Tibial artery (tissue), 4 donors: ENCODE measurements at regions of chr17 and their contacts with region 1.

Region 1: DNA sequence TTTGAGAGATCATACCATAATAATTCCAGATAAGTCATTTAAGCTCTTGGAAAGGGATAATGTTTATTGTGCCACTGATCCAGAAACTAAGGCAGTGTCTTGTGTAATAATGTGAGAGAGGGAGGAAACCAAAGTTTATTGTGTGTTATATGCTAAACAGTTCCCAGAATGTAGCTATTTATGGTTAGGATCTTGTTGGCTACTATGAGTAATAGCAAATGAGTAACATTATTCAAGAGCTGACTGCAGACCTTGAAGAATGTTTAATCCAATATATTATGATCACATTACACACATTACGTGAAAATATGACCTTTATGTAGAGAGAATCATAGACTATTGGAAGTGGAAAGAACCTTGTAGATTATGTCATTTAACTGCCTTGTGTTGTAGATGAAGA is 139.5 kb downstream of the BCAS3 start:
- DNase-seq: no peak
- H3K4me3 ChIP-seq: no peak overlapping the region
- H3K27ac ChIP-seq: no peak overlapping the region
- H3K4me1 ChIP-seq: no peaks in the 10 kb centered on the region
- H3K27me3 ChIP-seq: no peaks in the 10 kb centered on the region
- CTCF ChIP-seq: no peak

Region 2: DNA sequence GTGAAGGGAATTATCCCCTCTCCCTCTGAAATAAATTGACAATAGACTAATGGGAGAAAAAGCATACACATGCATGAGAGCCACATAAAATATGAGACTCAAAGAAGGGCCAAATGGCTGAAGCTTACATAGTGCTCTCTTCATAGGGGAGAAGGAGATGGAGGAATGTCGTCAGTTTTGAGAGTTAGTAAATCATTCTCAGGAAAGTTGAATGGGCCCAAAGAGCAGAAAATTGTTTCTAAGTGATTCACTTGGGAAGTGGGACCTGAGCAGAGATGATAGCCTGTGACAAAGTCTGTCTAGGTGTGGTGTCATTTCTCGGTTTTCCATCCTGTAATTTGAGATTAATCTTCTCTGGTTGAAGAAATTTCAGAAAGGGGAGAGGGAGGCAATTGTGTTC is 104.5 kb before region 1 on chr17:
- intact Hi-C with region 1: loop called (anchors 10 kb)
- DNase-seq: no peak
- H3K4me3 ChIP-seq: no peak overlapping the region
- H3K27ac ChIP-seq: no peak overlapping the region
- H3K4me1 ChIP-seq: no peaks in the 10 kb centered on the region
- H3K27me3 ChIP-seq: no peaks in the 10 kb centered on the region
- CTCF ChIP-seq: no peak